ENCODE measurements at regions of chr12 and their contacts with region 1.

Region 1: DNA sequence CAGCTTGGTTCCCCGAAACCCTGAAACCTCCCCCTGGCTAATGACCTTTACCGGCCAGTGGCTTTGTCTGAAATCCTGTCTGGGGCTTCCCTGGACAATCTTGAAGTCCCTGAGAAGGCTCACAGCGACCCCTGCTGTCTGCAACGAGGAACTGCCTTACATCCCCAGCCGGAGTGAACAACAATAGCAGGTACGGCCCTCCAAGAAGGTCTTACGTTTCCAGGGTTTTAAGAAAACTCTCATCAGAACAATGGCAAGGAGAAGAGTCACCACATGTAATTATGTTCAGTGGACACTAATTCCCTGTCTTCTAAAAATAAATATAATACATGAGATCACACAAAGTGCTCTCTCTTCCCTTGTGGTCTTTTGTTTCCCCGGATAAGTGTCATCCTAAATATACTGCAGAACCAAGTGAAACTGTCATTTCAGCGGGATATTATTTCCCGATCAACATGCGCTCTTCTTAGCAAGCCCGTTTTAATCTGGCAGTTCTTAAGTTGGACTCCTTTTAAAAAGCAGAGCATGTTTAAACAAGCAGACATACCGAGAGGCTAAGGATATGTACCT is 53.3 kb downstream of the RBM19 start:
- H3K4me3 Mint-ChIP-seq: no peak overlapping the region
- H3K27ac Mint-ChIP-seq: no peak overlapping the region
- H3K4me1 Mint-ChIP-seq: no peaks in the 10 kb centered on the region
- H3K27me3 Mint-ChIP-seq: no peaks in the 10 kb centered on the region

Region 2: GRCh38 chr12:112944028-112944690 is 968.7 kb before region 1 on chr12:
- intact Hi-C with region 1: no loop called
- H3K4me3 Mint-ChIP-seq: no peak overlapping the region
- H3K27ac Mint-ChIP-seq: no peak overlapping the region
- H3K4me1 Mint-ChIP-seq: peaks cover 11% of the 10 kb centered on the region
- H3K27me3 Mint-ChIP-seq: peaks cover 2% of the 10 kb centered on the region

Region 3: GRCh38 chr12:113462117-113462774 is 450.6 kb before region 1 on chr12:
- intact Hi-C with region 1: loop called (anchors 2 kb)
- H3K4me3 Mint-ChIP-seq: peak overlapping the region; percentile 72
- H3K27ac Mint-ChIP-seq: no peak overlapping the region
- H3K4me1 Mint-ChIP-seq: peaks cover 29% of the 10 kb centered on the region
- H3K27me3 Mint-ChIP-seq: peaks cover 91% of the 10 kb centered on the region

Region 4: GRCh38 chr12:113647048-113647447 is 265.8 kb before region 1 on chr12:
- intact Hi-C with region 1: loop called (anchors 2 kb)
- H3K4me3 Mint-ChIP-seq: no peak overlapping the region
- H3K27ac Mint-ChIP-seq: no peak overlapping the region
- H3K4me1 Mint-ChIP-seq: no peaks in the 10 kb centered on the region
- H3K27me3 Mint-ChIP-seq: peaks cover 42% of the 10 kb centered on the region

Region 5: GRCh38 chr12:113815031-113815430 is 97.8 kb before region 1 on chr12:
- intact Hi-C with region 1: no loop called
- H3K4me3 Mint-ChIP-seq: no peak overlapping the region
- H3K27ac Mint-ChIP-seq: no peak overlapping the region
- H3K4me1 Mint-ChIP-seq: no peaks in the 10 kb centered on the region
- H3K27me3 Mint-ChIP-seq: no peaks in the 10 kb centered on the region